ENCODE measurements at regions of chr5 and their contacts with region 1.

Region 1: DNA sequence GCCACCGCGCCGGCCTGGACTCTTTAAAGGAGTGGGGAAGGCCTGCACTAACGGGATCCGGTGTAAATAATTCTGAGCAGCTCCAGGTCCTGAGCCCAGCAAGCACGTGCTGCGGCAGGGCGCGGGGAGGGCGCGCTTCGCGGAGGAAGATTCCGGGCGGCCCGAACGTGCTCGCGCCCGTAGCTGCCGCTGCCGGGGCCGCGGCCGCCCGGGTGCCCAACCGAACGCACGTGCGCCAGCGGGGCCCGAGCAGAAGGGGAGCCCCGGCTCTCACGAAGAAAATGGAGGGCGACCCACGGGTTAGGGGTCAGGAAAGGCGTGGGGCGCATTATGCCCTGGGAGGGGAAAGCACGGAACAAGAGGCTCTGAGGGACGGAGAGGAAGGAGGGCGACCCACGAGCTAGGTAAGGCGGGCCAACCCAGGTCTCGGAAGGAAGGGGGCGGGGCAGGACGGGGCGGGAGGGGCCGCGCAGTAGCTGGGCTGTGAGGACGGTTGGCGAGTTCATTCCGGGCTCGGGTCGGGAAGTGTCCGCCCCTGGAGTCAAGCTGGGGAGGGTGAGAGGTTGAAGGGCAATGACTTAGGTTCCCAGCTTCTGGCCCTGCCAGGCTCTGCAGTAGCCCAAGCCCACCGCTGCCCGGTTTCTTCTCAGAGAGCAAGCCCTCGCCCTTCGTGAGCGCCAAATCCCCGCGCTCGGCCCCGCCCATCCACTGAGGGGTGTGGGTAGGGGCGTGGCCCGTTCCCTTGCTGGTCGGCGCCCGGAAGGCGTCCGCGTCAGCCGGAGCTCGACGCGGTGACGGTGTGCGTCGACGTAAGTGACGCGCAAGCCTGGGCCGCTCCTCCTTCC is at the start of gene ZNF131:
- H3K4me3 Mint-ChIP-seq: peak within 1 kb of the TSS; percentile 96
- H3K27ac Mint-ChIP-seq: peak within 1 kb of the TSS; percentile 98
- H3K4me1 Mint-ChIP-seq: peaks cover 27% of the 10 kb centered on the region
- H3K27me3 Mint-ChIP-seq: peaks cover 2% of the 10 kb centered on the region

Region 2: DNA sequence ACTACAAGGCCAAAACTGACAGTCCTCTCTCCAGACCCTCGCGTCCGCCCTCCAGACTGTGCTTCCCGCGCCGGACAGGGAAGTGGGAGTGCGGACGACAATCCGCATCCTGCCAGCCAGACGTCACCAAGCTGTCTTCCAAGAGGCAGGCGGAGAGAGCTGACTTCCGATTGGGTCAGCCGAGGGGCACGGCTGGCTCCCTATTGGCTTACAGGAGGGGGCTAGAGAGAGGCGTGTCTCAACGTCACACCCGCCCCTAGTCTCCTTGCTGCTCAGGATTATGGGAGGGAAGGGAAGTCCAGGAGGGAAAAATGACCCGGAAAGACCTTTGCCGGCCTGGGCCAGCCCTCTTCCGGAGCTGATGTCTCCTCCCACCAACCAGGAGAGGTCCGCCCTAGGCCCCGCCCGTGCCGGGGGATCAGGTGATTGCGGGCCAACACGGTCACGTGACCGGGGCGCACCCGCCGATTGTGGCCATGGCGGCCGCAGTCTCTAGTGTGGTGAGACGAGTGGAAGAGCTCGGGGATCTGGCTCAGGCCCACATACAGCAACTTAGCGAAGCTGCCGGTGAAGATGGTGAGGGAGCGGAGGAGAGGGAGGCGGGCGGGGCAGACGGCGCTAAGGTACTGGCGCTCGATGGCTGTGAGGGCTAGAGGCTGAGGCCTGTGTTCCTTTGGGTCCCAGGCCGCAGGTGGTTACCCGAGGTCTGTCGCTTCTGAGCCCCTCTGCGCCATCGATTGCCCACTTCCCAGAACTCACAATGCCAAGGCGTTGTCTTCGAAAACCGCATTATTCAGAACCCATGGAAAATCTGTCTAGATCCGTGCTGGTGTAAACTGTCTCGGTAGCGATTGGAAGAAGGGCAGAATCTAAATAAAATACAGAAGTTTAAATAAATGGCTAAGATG is 1216.8 kb before region 1 on chr5 and contains the start of gene RIMOC1:
- intact Hi-C with region 1: loop called (anchors 10 kb)
- H3K4me3 Mint-ChIP-seq: peak within 1 kb of the TSS; percentile 95
- H3K27ac Mint-ChIP-seq: peak within 1 kb of the TSS; percentile 99
- H3K4me1 Mint-ChIP-seq: peaks cover 45% of the 10 kb centered on the region
- H3K27me3 Mint-ChIP-seq: peaks cover 9% of the 10 kb centered on the region

Region 3: GRCh38 chr5:42962124-42962523 is 158.8 kb before region 1 on chr5:
- intact Hi-C with region 1: no loop called
- H3K4me3 Mint-ChIP-seq: no peak overlapping the region
- H3K27ac Mint-ChIP-seq: no peak overlapping the region
- H3K4me1 Mint-ChIP-seq: peaks cover 6% of the 10 kb centered on the region
- H3K27me3 Mint-ChIP-seq: no peaks in the 10 kb centered on the region

Region 4: GRCh38 chr5:42994246-42995151 is 126.4 kb before region 1 on chr5:
- intact Hi-C with region 1: loop called (anchors 1 kb)
- H3K4me3 Mint-ChIP-seq: peak overlapping the region; percentile 100
- H3K27ac Mint-ChIP-seq: peak overlapping the region; percentile 100
- H3K4me1 Mint-ChIP-seq: peaks cover 34% of the 10 kb centered on the region
- H3K27me3 Mint-ChIP-seq: peaks cover 10% of the 10 kb centered on the region

Region 5: GRCh38 chr5:43105369-43106289 is 15.3 kb before region 1 on chr5:
- intact Hi-C with region 1: loop called (anchors 2 kb)
- H3K4me3 Mint-ChIP-seq: peak overlapping the region; percentile 72
- H3K27ac Mint-ChIP-seq: peak overlapping the region; percentile 73
- H3K4me1 Mint-ChIP-seq: peaks cover 20% of the 10 kb centered on the region
- H3K27me3 Mint-ChIP-seq: no peaks in the 10 kb centered on the region

Region 6: DNA sequence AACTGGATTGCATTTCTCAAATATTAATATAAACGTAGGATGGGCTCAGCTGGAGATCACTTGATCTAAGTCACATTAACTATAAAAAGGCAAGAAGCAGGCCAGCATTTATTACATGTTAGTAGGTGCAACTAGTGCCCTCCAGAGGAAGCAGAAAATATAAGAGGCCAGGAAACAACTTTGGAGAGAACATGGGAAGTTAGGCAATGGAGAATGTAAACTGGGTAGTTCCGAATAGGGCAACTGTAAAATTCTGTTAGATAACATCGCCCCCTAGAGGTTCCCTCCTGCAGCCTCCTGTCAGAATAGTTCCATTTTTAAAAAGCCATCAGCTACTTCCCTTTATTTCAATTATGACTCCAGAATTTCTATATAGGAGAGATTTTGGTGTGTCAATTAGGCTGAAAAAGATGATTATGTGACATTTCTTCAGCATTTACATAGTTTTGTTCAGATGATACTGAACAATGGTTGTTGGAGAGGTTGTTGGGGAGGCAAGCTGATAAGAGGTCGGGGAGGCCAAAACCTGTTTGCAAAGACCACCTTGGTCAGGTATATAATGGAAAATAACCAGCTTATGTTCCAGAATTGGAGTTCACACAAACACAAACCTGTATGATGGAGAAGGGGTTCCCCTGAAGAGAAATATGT is 268.9 kb after region 1 on chr5:
- intact Hi-C with region 1: loop called (anchors 5 kb)
- H3K4me3 Mint-ChIP-seq: no peak overlapping the region
- H3K27ac Mint-ChIP-seq: peak overlapping the region; percentile 4
- H3K4me1 Mint-ChIP-seq: peaks cover 18% of the 10 kb centered on the region
- H3K27me3 Mint-ChIP-seq: no peaks in the 10 kb centered on the region

Region 7: GRCh38 chr5:43409809-43410271 is 288.9 kb after region 1 on chr5:
- intact Hi-C with region 1: no loop called
- H3K4me3 Mint-ChIP-seq: no peak overlapping the region
- H3K27ac Mint-ChIP-seq: no peak overlapping the region
- H3K4me1 Mint-ChIP-seq: no peaks in the 10 kb centered on the region
- H3K27me3 Mint-ChIP-seq: no peaks in the 10 kb centered on the region

Region 8: GRCh38 chr5:43602461-43603343 is 481.8 kb after region 1 on chr5 and contains the start of gene NNT:
- intact Hi-C with region 1: loop called (anchors 5 kb)
- H3K4me3 Mint-ChIP-seq: peak within 1 kb of the TSS; percentile 86
- H3K27ac Mint-ChIP-seq: peak within 1 kb of the TSS; percentile 87
- H3K4me1 Mint-ChIP-seq: peaks cover 38% of the 10 kb centered on the region
- H3K27me3 Mint-ChIP-seq: no peaks in the 10 kb centered on the region

Measured in dendritic cell treated with granulocyte-macrophage colony-stimulating factor and Interleukin-4, amounts not matched to agents 40 ng/mL and 50 ng/mL, for 4 days (primary cell).